RWPE1 (cell line): ENCODE measurements at regions of chr1 and their contacts with region 1.

Region 1: DNA sequence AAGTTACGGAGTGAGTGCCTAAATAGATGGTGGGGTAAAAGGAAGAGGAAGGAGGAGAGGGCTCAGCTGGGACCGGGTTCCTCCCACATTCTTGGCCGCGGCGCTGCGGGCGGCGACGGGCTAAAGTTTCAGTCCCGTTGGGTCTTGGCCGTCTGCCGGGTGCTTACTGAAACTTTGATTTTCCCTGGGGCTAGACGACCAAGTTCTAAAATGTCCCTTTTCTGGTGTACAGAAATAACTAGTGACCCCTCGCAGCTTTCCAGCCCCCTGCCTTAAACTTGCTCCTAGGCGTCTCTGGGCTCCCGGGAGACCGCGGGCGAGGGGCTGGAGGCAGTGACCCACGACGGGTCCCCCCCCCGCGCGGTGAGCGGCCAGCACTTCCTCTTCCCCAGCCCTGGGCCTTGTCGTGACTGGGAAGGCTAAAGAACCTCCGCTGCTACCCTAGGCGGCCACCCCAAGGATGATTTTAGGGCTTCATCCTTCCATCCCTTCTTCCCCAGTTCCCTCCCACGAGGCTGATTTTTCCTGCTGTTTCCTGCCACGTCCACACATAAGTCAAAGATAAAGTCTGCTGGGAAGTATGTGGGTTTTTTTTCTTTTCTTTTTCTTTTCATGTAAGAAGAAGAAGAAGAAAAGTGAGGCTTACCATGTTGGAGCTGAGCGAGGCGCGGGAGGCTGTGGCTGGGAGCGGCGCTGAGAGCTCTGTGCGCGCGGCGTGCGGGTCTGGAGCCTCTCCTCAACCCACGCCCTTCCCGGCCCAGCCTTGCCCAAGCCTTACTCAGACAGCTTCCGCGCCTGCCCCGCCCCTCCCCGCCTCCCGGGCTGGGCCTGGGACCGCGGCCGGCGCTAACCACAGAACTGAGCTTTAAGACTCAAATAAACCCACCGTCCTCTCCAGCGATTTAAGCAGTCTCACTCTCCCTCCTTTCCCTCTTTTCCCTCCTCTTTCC is at the start of gene S100A11:
- DNase-seq: peak; percentile 84
- H3K27ac ChIP-seq: peak within 1 kb of the TSS; percentile 97
- CTCF ChIP-seq: no peak

Region 2: GRCh38 chr1:150692720-150693119 is 1343.8 kb before region 1 on chr1:
- CTCF ChIA-PET with region 1: no interaction called
- POLR2A ChIA-PET with region 1: interaction called, 11 read pairs
- DNase-seq: peak; percentile 6
- H3K27ac ChIP-seq: no peak overlapping the region
- CTCF ChIP-seq: no peak